ENCODE measurements at regions of chr4 and their contacts with region 1.

Region 1: DNA sequence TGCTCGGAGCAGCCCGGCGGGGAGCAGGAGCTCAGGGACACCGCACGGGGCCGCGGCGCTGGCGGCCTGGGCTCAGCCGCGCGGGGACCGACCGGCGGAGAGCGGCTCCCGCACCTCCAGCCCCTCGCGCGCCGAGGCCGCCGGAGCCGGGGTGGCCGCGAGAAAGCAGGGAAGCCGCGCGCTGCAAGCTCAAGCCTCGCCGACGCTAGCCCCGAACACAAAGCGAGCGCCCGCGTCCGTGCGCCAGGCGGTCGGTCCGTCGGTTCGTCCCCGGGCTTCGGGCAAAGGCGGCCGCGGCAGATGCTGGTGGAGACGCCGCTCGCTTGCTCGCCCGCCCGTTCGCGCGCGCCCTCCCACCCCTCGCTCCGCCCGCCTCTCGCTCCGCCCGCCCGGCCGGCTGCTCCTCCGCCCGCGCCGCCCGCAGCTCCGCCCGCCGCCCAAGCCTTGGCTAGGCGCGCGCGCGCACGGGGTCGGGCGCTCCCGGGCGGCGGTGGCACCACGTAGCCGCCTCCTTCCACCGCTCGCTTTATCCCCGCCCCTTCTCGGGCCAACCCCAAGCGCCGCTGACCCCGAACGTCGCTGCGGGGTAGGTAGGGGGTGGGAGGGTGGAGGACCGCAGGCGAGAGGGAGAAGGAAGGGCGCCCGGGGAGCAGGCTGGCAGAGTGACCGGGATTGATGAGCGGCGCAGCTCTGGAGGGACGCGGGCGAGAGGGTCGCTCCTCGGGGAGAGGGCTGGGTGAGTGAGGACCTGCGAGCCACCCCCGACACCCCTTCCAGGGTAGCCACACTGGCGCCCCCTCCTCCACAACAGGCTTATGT is at the start of gene TSPAN5:
- DNase-seq: peak; percentile 88
- H3K4me3 ChIP-seq: peak within 1 kb of the TSS; percentile 67
- H3K27ac ChIP-seq: peak within 1 kb of the TSS; percentile 41
- H3K4me1 ChIP-seq: no peaks in the 10 kb centered on the region
- H3K27me3 ChIP-seq: no peaks in the 10 kb centered on the region
- CTCF ChIP-seq: no peak
- total RNA-seq, gene TSPAN5: 15.2 and 16.9 TPM in 2 replicates

Region 2: DNA sequence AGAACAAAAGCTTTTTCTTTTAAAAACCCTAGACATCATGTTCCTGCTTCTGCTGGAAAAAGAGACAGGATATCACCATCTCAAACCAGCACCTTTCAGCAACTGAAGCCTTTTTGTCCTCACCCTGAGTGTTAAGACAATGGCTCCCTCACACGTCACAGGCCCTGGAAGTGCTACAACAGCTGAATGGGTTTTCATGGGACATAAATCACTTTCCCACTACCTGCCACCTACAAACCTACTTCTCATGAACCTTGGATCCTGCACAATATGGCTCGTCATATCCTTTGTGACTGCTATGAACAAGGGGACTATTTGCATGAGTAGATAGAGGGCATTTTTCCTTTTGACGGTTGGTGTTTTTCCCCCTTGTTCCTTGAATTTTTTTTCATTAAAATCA is 93.6 kb before region 1 on chr4:
- CTCF ChIA-PET with region 1: no interaction called
- POLR2A ChIA-PET with region 1: interaction called, 3 read pairs
- intact Hi-C with region 1: loop called (anchors 1 kb)
- DNase-seq: peak; percentile 26
- H3K4me3 ChIP-seq: no peak overlapping the region
- H3K27ac ChIP-seq: no peak overlapping the region
- H3K4me1 ChIP-seq: peaks cover 41% of the 10 kb centered on the region
- H3K27me3 ChIP-seq: no peaks in the 10 kb centered on the region
- CTCF ChIP-seq: no peak

Region 3: DNA sequence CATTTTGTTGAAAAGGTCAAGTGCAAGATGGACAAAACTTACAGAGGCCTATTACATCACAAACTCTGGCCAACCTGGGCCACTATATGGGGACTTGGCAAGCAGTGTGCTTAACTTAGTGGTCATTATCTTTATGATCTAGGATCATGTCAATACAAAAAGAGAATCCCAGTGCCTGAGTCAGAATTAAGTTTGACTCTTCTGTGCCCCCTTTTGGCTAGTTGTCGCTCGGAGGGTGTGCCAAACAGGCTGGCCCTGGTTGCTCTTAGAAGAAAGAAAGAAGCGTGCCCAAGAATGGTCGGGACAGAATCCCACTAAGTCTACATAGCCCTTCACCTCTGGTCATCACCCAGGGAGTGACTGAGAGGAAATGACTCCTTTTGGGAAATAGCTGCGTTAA is 170.3 kb after region 1 on chr4:
- CTCF ChIA-PET with region 1: no interaction called
- POLR2A ChIA-PET with region 1: no interaction called
- intact Hi-C with region 1: loop called (anchors 5 kb)
- DNase-seq: peak; percentile 66
- H3K4me3 ChIP-seq: no peak overlapping the region
- H3K27ac ChIP-seq: no peak overlapping the region
- H3K4me1 ChIP-seq: peaks cover 23% of the 10 kb centered on the region
- H3K27me3 ChIP-seq: no peaks in the 10 kb centered on the region
- CTCF ChIP-seq: peak; percentile 62

Region 4: GRCh38 chr4:98890702-98891455 is 232.4 kb after region 1 on chr4:
- CTCF ChIA-PET with region 1: no interaction called
- POLR2A ChIA-PET with region 1: interaction called, 11 read pairs
- intact Hi-C with region 1: no loop called
- DNase-seq: no peak
- H3K4me3 ChIP-seq: no peak overlapping the region
- H3K27ac ChIP-seq: no peak overlapping the region
- H3K4me1 ChIP-seq: no peaks in the 10 kb centered on the region
- H3K27me3 ChIP-seq: no peaks in the 10 kb centered on the region
- CTCF ChIP-seq: no peak

Measured in A673 (cell line).